Gastrocnemius medialis (tissue), 4 donors: ENCODE measurements at regions of chr2 and their contacts with region 1.

Region 1: GRCh38 chr2:171416009-171416926 is 17.5 kb downstream of the METTL8 start:
- DNase-seq: peak; percentile 64 to 78
- ATAC-seq: peak; percentile 93 to 97
- H3K4me3 ChIP-seq: no peak overlapping the region
- H3K27ac ChIP-seq: peak overlapping the region in 1 of 4 donors; percentile 1
- H3K4me1 ChIP-seq: peaks cover 0 to 8% of the 10 kb centered on the region in 2 donors
- H3K27me3 ChIP-seq: no peaks in the 10 kb centered on the region
- CTCF ChIP-seq: peak; percentile 61 to 78 (median 66)
- POLR2A ChIP-seq: no peak

Region 2: DNA sequence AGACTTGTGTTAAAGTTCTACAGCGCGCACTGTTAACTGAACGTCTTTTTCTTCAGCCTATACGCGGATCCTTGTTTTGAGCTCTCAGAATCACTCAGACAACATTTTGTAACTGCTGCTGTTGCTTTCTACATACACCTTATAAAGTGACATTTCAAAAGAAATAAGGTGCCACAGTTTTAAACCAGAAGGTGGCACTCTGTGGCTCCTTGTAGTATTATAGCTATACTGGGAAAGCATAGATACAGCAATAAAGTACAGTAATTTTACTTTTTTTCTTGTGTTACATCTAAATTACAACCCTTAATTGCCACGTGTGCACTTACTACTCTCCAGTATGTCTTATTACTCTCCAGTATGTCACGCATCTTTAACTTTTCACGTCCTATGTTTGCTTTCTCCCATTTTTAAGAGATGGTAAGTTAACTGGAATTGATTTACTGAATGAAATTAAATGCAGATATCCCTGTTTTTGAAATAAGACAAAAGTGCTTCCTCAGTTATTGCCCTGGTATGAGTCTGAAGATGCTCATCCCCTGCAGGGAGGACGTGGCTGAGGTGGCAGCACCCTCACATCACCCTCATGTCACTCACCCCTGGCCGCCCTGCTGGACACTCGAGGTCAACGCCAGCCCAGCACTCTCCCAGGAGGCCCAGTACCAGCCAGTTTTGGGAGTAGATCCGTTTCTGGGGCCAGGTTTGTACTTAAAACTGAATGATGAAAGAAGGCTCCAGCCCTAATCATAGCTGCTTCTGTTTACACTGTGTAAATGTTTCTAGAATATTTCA is 449.4 kb before region 1 on chr2:
- in situ Hi-C with region 1: loop called (anchors 5 kb)
- intact Hi-C with region 1: no loop called
- DNase-seq: no peak
- ATAC-seq: no peak
- H3K4me3 ChIP-seq: no peak overlapping the region
- H3K27ac ChIP-seq: no peak overlapping the region
- H3K4me1 ChIP-seq: no peaks in the 10 kb centered on the region
- H3K27me3 ChIP-seq: no peaks in the 10 kb centered on the region
- CTCF ChIP-seq: no peak
- POLR2A ChIP-seq: no peak

Region 3: DNA sequence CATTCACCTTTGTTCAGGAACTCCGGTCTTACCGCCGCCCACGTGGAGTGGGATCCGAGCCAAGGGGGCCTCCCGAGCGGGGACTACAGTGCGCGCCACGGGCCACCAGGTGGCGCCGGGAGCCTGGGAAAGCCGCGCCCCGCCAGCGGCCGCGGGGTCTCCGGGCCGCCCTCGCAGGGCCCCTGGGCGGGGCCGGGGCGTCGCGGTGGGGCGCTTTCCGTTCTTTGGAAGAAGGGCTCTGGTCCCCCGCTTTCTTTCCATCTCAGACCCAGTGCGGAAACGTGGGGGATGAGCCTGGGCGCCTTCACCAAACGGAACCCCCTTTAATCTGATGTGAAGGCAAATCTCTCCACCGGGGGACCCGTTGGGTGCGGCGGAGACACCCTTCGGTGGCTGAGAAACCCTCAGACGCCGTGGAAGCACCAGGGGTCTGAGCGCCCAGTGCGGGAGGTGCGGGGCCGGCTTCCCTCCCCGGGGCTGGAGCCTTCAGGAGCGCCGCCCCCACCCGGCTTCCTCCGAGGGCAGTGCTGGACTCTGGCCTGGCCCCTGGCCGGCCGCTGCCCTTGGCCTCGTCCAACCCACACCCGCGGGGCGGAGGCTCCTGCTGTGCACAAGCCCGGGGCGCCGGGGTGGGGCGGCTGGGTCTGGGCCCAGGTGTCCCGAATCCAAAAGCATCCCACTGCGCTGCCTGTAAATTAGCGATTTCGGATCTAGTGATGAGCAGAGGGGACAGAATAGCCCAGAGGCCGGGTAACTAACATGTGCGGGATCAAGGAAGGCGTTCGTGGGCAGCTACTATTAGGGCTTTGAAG is 442.6 kb before region 1 on chr2:
- in situ Hi-C with region 1: loop called (anchors 5 kb)
- intact Hi-C with region 1: loop called (anchors 1 kb)
- DNase-seq: peak; percentile 61 to 72
- ATAC-seq: peak; percentile 93
- H3K4me3 ChIP-seq: peak overlapping the region; percentile 65 to 78 (median 74)
- H3K27ac ChIP-seq: peak overlapping the region; percentile 56 to 73 (median 64)
- H3K4me1 ChIP-seq: peaks cover 4 to 5% of the 10 kb centered on the region in 2 donors
- H3K27me3 ChIP-seq: no peaks in the 10 kb centered on the region
- CTCF ChIP-seq: peak; percentile 82 to 98 (median 97)
- POLR2A ChIP-seq: peak; percentile 11 to 13

Region 4: GRCh38 chr2:171136024-171136423 is 280.2 kb before region 1 on chr2:
- in situ Hi-C with region 1: no loop called
- intact Hi-C with region 1: no loop called
- DNase-seq: no peak
- ATAC-seq: no peak
- H3K4me3 ChIP-seq: no peak overlapping the region
- H3K27ac ChIP-seq: no peak overlapping the region
- H3K4me1 ChIP-seq: peaks cover 31 to 41% of the 10 kb centered on the region in 2 donors
- H3K27me3 ChIP-seq: no peaks in the 10 kb centered on the region
- CTCF ChIP-seq: no peak
- POLR2A ChIP-seq: no peak